GM13977 (cell line): ENCODE measurements at regions of chr12 and their contacts with region 1.

Region 1: DNA sequence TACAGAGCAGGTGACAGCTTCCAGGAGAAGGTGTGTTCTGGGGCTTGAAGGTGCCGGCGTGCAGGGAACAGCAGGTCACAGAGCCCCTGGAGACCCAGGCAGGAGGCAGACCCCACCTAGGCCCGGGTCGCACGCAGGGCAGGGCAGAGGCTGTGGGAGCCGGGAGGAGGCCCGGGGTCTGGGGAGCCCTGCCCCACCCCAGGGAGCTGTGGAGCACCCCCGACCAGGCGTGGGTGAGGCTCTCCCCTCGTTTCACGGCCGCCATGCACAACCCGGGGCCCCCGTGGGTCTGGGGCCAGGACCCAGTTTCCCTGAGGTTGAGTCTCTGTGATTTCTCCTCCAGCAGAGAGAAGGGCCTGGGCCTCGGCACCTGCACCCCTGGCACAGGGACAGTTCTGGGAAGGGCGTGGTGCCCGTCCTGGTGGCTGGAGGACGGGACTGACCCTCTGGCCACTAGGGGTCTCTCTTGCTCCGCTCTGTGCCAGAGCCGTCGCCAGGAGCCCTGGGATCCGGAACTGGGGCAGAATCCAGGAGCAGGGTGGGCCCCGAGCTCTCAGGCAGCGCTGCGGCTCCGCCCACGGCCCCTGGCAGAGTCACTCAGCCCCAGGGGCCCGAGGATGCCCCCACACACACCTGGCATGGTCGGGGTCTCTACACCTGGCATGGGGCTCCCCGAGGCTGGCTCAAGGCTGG is 75.2 kb upstream of the FBRSL1 start:
- DNase-seq: peak; percentile 94
- CTCF ChIP-seq: peak; percentile 95

Region 2: DNA sequence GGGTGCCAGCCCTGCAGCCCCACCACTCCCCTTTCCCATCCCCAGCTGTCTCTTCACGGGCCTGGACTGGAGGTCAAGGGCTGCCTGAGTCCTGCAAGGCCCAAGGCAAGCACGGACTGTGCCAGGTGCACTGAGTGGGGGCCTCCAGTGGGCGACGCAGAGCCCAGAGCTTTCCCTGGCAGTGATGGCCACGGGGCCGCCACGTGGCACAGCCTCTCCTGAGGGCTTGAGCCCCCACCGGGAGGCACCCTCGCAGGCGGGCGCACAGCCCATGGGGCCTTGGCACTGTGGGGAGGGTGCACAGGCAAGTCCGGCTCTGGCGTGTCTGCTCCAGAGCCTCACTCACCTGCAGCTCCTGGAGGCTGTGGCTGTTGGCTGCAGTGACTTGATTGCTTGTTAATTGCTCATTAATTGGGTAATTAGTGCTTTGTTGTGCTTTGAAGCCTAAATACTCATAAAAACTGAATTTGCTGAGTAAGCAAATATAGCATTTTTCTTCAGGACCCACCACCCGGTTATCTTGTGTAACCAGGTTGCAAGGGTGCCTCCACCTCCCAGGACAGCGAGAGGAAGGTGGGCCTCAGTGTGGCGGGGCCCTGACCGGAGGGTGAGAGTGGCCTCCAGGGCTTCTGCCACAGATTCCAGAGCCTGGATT is 123.7 kb after region 1 on chr12:
- in situ Hi-C with region 1: loop called (anchors 10 kb)
- DNase-seq: no peak
- CTCF ChIP-seq: no peak

Region 3: DNA sequence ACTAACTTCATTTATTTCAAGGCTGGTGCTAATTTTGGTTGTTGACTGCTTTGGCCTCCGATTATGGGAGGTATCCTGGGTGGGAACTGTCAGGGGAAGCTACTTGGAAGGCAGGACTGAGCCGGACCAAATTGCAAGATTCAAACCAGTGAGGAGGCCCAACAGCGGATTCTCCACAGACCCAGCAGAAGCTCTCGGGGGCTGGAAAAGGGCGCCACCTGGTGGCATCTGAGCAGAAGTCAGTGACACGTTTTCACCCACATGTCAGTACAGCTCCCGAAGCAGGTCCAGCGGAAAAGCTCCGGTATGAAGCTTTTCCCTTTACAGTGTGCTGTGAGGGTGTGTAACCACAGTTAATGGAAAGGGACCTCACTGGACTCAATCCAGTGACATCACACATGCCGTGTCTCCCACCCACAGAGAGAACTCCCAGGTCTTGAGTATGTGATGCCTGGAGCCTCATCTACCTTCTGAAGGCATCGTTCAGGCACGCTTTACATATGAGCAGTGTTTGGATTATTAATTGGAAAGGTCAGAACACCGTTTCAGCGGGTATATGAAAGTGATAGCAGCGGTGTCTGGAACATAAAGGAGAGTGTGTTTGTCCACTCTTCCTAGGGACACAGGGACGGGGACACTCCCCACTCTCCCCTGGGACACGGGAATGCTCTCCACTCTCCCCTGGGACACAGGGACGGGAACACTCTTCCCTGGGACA is 200.2 kb after region 1 on chr12:
- in situ Hi-C with region 1: loop called (anchors 25 kb)
- DNase-seq: peak; percentile 89
- CTCF ChIP-seq: peak; percentile 85